Left ventricle myocardium inferior (tissue), 1 donor: ENCODE measurements at regions of chr1 and their contacts with region 1.

Region 1: DNA sequence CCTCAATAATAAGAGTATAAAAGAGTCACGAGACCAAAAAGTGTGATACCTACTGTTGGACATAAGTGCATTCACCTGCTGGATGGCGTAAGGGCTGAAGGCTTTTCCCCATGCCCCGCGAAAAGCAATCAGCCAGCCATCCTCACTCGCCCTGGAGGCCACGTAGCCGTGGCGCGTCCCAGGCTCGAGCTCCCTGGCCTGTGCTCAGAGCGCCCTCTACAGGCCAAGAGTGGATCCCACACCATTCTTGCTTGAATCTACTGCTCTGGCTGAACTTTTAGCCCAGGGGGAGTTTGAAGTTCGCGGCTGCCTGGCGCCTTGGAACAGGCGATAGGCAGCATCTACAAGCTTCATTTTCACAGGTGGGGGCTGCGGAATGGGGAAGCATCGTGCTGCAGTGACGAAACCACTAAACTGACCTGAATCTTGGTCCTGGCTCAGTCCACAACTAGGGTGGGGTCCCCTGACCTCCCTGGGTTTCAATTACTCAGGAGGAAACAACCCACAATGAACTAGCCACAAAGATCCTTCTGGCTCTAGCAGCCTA is 70.3 kb upstream of the SERBP1 start:
- DNase-seq: peak; percentile 81
- H3K4me3 ChIP-seq: no peak overlapping the region
- H3K27ac ChIP-seq: no peak overlapping the region
- H3K4me1 ChIP-seq: peaks cover 6% of the 10 kb centered on the region
- H3K27me3 ChIP-seq: peaks cover 16% of the 10 kb centered on the region
- CTCF ChIP-seq: peak; percentile 99

Region 2: GRCh38 chr1:67230539-67230938 is 269.9 kb before region 1 on chr1:
- intact Hi-C with region 1: loop called (anchors 10 kb)
- DNase-seq: no peak
- H3K4me3 ChIP-seq: no peak overlapping the region
- H3K27ac ChIP-seq: no peak overlapping the region
- H3K4me1 ChIP-seq: no peaks in the 10 kb centered on the region
- H3K27me3 ChIP-seq: peaks cover 12% of the 10 kb centered on the region
- CTCF ChIP-seq: no peak

Region 3: GRCh38 chr1:67347688-67348472 is 152.6 kb before region 1 on chr1:
- intact Hi-C with region 1: loop called (anchors 5 kb)
- DNase-seq: peak; percentile 20
- H3K4me3 ChIP-seq: no peak overlapping the region
- H3K27ac ChIP-seq: no peak overlapping the region
- H3K4me1 ChIP-seq: no peaks in the 10 kb centered on the region
- H3K27me3 ChIP-seq: peaks cover 6% of the 10 kb centered on the region
- CTCF ChIP-seq: peak; percentile 82

Region 4: DNA sequence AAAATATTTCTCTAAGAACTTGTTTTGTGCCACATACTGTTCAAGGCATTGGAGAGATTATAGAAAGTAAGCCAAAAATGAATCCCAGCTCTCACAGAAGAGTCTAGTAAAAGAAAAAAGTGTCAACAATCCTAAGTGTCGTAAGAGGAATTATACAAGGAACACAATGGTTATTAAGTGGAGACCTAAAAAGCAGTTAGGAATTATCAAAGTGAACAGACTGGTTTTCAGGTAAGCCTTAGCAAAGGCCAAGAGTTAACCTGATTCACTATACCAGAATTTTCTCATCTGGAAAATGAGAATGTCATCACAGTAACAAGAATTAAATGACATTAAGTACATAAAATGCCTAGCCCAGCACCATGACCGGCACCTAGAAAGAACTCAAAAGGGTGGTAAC is 85.9 kb before region 1 on chr1:
- intact Hi-C with region 1: no loop called
- DNase-seq: no peak
- H3K4me3 ChIP-seq: no peak overlapping the region
- H3K27ac ChIP-seq: no peak overlapping the region
- H3K4me1 ChIP-seq: peaks cover 13% of the 10 kb centered on the region
- H3K27me3 ChIP-seq: no peaks in the 10 kb centered on the region
- CTCF ChIP-seq: no peak